Mammary epithelial cell (primary cell): ENCODE measurements at regions of chr5 and their contacts with region 1.

Region 1: DNA sequence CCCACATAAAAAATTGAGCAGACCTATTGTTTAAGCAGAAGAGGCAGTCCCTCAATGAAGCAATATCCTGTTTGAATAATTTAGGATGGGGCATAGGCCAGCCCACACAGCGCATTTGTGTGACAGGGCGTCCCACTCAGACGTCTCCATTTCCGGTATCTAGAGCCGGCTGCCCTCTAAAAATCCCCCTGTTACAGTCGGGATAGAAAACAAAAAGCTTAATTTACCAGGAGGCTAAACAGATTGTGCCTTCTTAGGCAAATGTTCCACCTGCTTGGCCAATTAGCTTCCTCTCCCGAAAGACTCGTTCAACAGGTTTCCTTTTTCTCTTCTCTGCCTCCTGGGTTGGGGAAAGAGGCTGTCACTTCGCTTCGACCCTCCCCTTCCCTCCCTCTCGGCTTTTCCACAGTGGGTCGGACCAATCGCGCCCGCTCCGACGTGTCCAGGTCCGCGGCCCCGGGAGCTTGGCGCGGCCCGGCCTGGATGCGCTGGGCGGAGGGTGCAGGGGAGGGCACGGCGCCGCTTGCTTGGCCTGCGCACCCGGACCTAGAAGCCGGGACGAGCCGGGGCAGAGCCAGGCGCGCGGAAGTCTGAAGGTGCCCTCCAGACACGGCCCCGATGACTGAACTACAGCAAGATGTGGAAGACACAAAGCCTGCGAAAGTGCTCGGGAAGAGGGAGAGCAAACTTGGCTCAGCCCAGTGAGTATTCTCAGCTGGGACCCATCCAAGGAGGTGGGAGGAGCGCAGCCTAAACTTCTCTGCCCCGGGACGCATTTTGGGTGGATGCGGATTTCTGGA is at the start of gene GRAMD2B:
- DNase-seq: peak; percentile 97
- H3K4me3 ChIP-seq: peak within 1 kb of the TSS; percentile 73 to 92 (median 82)
- H3K27ac ChIP-seq: peak within 1 kb of the TSS; percentile 93
- H3K4me1 ChIP-seq: peaks cover 17% of the 10 kb centered on the region
- H3K27me3 ChIP-seq: no peaks in the 10 kb centered on the region
- CTCF ChIP-seq: no peak
- total RNA-seq, gene GRAMD2B: 56.2 to 113 TPM

Region 2: DNA sequence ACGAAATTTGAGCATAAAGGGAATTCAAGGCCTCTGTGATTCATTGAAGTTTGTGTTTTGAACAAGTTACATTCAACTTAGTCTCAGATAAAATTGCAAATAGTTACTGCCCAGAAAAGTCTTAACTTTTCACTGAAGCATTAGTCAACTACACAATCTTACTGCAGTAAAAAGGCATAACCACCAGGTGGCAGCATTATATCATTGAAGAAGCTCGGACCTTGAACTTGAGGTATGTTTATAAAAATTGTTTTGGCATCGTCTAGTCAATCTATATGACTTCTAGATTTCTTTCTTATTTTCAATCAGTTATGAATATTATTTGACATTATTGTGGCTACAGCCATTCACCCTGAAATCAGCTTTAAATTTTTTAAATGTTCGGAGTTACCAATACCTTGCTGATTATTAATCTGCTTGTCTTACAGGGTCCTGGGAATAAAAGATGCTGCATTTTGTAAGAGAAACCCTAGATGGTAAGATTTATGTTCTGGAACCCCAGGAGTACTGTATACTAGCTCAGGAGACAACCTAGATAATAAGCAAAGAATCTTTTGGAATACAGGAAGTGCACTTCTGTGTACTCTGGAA is 83.9 kb before region 1 on chr5:
- CTCF ChIA-PET with region 1: no interaction called
- dilution Hi-C with region 1: no loop called
- in situ Hi-C with region 1: no loop called
- intact Hi-C with region 1: loop called (anchors 1 kb)
- DNase-seq: peak; percentile 57
- H3K4me3 ChIP-seq: no peak overlapping the region
- H3K27ac ChIP-seq: no peak overlapping the region
- H3K4me1 ChIP-seq: peaks cover 19% of the 10 kb centered on the region
- H3K27me3 ChIP-seq: no peaks in the 10 kb centered on the region
- CTCF ChIP-seq: peak; percentile 72 to 79

Region 3: GRCh38 chr5:126384985-126385384 is 38.2 kb before region 1 on chr5:
- CTCF ChIA-PET with region 1: no interaction called
- dilution Hi-C with region 1: loop called (anchors 5 kb)
- in situ Hi-C with region 1: no loop called
- intact Hi-C with region 1: no loop called
- DNase-seq: peak; percentile 60
- H3K4me3 ChIP-seq: peak overlapping the region in 1 of 3 experiments; percentile 5
- H3K27ac ChIP-seq: peak overlapping the region; percentile 55
- H3K4me1 ChIP-seq: peaks cover 23% of the 10 kb centered on the region
- H3K27me3 ChIP-seq: no peaks in the 10 kb centered on the region
- CTCF ChIP-seq: no peak

Region 4: GRCh38 chr5:126449751-126450271 is 26.6 kb after region 1 on chr5:
- CTCF ChIA-PET with region 1: no interaction called
- dilution Hi-C with region 1: no loop called
- in situ Hi-C with region 1: no loop called
- intact Hi-C with region 1: loop called (anchors 1 kb)
- DNase-seq: peak; percentile 98
- H3K4me3 ChIP-seq: peak overlapping the region in 2 of 3 experiments; percentile 8 to 12
- H3K27ac ChIP-seq: peak overlapping the region; percentile 99
- H3K4me1 ChIP-seq: peaks cover 68% of the 10 kb centered on the region
- H3K27me3 ChIP-seq: no peaks in the 10 kb centered on the region
- CTCF ChIP-seq: no peak

Region 5: GRCh38 chr5:126471875-126472537 is 48.8 kb after region 1 on chr5:
- CTCF ChIA-PET with region 1: no interaction called
- dilution Hi-C with region 1: no loop called
- in situ Hi-C with region 1: no loop called
- intact Hi-C with region 1: loop called (anchors 2 kb)
- DNase-seq: peak; percentile 86
- H3K4me3 ChIP-seq: no peak overlapping the region
- H3K27ac ChIP-seq: peak overlapping the region; percentile 80
- H3K4me1 ChIP-seq: peaks cover 32% of the 10 kb centered on the region
- H3K27me3 ChIP-seq: no peaks in the 10 kb centered on the region
- CTCF ChIP-seq: no peak

Region 6: DNA sequence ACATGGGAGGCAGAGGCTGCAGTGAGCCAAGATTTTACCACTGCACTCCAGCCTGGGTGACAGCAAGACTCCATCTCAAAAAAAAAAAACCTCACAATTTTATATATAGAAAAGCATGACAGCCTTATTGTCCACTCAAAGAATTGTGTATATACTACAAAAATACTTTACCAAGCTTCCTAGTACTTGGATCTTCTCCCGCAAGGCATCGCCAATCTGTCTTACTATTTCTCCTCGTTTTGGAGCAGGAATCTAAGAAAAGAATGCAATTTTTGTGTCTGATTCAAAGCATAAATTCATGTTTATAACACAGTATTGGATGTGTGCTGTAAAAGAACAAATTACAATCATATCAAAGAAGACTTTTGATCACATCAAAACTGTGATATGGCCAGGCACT is 160.6 kb after region 1 on chr5:
- CTCF ChIA-PET with region 1: no interaction called
- dilution Hi-C with region 1: no loop called
- in situ Hi-C with region 1: no loop called
- intact Hi-C with region 1: no loop called
- DNase-seq: no peak
- H3K4me3 ChIP-seq: no peak overlapping the region
- H3K27ac ChIP-seq: no peak overlapping the region
- H3K4me1 ChIP-seq: no peaks in the 10 kb centered on the region
- H3K27me3 ChIP-seq: no peaks in the 10 kb centered on the region
- CTCF ChIP-seq: no peak